B cell (primary cell): ENCODE measurements at regions of chr3 and their contacts with region 1.

Region 1: DNA sequence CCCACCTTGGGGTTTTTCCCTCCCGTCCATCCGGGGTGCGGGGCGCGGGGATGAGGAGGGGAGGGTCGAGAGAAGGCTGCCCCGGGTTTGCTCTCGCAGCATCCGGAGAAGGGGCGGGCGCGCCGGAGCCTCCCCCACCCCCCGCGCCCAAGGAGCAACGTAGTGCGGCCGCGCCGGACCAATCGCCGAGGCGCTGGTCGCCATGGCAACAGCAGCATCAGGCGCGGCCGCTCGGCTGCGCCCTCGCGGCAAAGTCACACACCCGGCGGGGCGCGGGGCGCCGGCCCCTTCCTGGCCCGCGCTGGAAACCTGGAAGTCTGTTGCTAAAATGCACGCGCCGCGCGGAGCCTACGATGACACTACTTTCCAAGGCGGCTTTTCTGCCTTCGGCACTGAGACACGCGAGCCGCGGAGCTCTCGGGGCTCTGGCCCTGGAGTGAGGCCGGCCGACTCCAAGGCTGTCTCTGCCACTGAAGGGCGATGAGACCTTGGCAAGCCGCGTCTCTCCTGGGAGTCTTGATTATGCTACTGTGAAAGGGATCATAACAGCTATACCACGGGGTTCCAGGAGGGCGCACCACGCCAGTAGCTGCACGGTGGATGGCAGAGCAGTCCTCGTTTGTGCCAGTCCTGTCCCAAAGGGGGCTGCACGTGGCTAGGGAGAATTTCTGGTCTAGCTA is at the start of gene IQSEC1:
- DNase-seq: peak; percentile 94
- ATAC-seq: peak; percentile 71
- H3K4me3 ChIP-seq: peak within 1 kb of the TSS; percentile 21 to 65 (median 53)
- H3K4me3 Mint-ChIP-seq: peak within 1 kb of the TSS; percentile 91
- H3K27ac ChIP-seq: peak within 1 kb of the TSS; percentile 79 to 90
- H3K27ac Mint-ChIP-seq: peak within 1 kb of the TSS; percentile 93
- H3K4me1 ChIP-seq: peaks cover 62 to 67% of the 10 kb centered on the region in 2 donors
- H3K4me1 Mint-ChIP-seq: peaks cover 68% of the 10 kb centered on the region
- H3K27me3 ChIP-seq: no peaks in the 10 kb centered on the region
- H3K27me3 Mint-ChIP-seq: no peaks in the 10 kb centered on the region
- CTCF ChIP-seq: no peak
- total RNA-seq, gene IQSEC1: 222 and 235 TPM in 2 replicates

Region 2: GRCh38 chr3:12967606-12968351 is 105.7 kb before region 1 on chr3:
- CTCF ChIA-PET with region 1: no interaction called
- POLR2A ChIA-PET with region 1: no interaction called
- intact Hi-C with region 1: loop called (anchors 2 kb)
- DNase-seq: peak; percentile 91
- ATAC-seq: peak; percentile 98
- H3K4me3 ChIP-seq: peak overlapping the region in 4 of 5 experiments; percentile 16 to 61 (median 44)
- H3K4me3 Mint-ChIP-seq: peak overlapping the region; percentile 86
- H3K27ac ChIP-seq: peak overlapping the region in 1 of 2 donors; percentile 11
- H3K27ac Mint-ChIP-seq: peak overlapping the region; percentile 85
- H3K4me1 ChIP-seq: peaks cover 55 to 78% of the 10 kb centered on the region in 2 donors
- H3K4me1 Mint-ChIP-seq: peaks cover 77% of the 10 kb centered on the region
- H3K27me3 ChIP-seq: no peaks in the 10 kb centered on the region
- H3K27me3 Mint-ChIP-seq: no peaks in the 10 kb centered on the region
- CTCF ChIP-seq: no peak

Region 3: DNA sequence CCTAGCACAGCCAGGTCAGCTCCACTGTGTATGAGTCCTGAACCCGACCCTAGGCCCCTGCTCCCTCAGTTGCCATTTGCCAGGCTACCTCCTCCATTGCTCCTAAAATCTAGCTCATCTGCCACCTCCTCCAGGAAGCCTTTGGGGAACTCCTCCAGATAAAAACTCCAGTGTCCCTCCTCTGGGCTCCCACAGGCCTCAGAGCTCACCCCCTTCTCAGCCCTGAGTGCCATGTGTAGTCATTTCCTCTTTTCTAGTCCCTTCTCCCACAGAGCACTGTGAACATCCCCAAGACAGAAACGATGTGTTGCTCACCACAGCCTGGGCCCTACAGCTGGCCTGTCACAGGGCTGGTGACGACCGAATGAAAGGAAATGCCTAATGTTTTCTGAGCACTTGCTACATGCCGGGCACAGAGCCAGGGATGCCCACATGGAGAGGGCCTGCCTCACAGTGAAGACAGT is 61.2 kb before region 1 on chr3:
- CTCF ChIA-PET with region 1: interaction called, 6 read pairs
- POLR2A ChIA-PET with region 1: interaction called, 3 read pairs
- intact Hi-C with region 1: loop called (anchors 1 kb)
- DNase-seq: peak; percentile 88
- ATAC-seq: peak; percentile 31
- H3K4me3 ChIP-seq: peak overlapping the region in 2 of 5 experiments; percentile 3 to 6
- H3K4me3 Mint-ChIP-seq: peak overlapping the region; percentile 86
- H3K27ac ChIP-seq: peak overlapping the region; percentile 96 to 97
- H3K27ac Mint-ChIP-seq: peak overlapping the region; percentile 95
- H3K4me1 ChIP-seq: peaks cover 98 to 100% of the 10 kb centered on the region in 2 donors
- H3K4me1 Mint-ChIP-seq: peaks cover 95% of the 10 kb centered on the region
- H3K27me3 ChIP-seq: no peaks in the 10 kb centered on the region
- H3K27me3 Mint-ChIP-seq: no peaks in the 10 kb centered on the region
- CTCF ChIP-seq: no peak

Region 4: GRCh38 chr3:13083898-13084297 is 10.4 kb after region 1 on chr3:
- CTCF ChIA-PET with region 1: interaction called, 5 read pairs
- POLR2A ChIA-PET with region 1: interaction called, 8 read pairs
- intact Hi-C with region 1: loop called (anchors 1 kb)
- DNase-seq: peak; percentile 89
- ATAC-seq: peak; percentile 58
- H3K4me3 ChIP-seq: peak overlapping the region in 1 of 5 experiments; percentile 17
- H3K4me3 Mint-ChIP-seq: peak overlapping the region; percentile 82
- H3K27ac ChIP-seq: peak overlapping the region; percentile 86 to 94
- H3K27ac Mint-ChIP-seq: peak overlapping the region; percentile 95
- H3K4me1 ChIP-seq: peaks cover 83 to 98% of the 10 kb centered on the region in 2 donors
- H3K4me1 Mint-ChIP-seq: peaks cover 90% of the 10 kb centered on the region
- H3K27me3 ChIP-seq: no peaks in the 10 kb centered on the region
- H3K27me3 Mint-ChIP-seq: no peaks in the 10 kb centered on the region
- CTCF ChIP-seq: no peak

Region 5: DNA sequence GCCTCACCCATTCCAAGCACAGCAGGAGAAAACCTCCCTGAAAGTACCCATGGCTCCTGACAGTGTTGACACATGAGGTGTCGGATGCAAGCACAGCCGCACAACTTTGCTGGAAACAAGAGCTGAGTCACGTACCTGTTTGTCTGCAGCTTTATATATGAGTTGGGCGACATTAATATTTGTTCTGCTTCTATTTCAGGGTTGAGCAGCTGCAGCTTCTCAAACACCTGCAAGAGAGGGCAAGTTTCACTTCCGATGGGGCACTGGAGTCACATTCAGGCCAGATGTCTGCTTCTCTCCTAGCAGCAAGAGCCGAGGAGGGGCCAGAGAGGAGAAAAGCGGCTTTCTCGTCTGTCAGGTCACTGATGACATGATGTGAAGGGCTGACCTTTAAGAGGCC is 258.7 kb after region 1 on chr3:
- CTCF ChIA-PET with region 1: no interaction called
- POLR2A ChIA-PET with region 1: no interaction called
- intact Hi-C with region 1: loop called (anchors 5 kb)
- DNase-seq: peak; percentile 87
- ATAC-seq: peak; percentile 89
- H3K4me3 ChIP-seq: no peak overlapping the region
- H3K4me3 Mint-ChIP-seq: peak overlapping the region; percentile 62
- H3K27ac ChIP-seq: peak overlapping the region; percentile 46 to 64
- H3K27ac Mint-ChIP-seq: peak overlapping the region; percentile 87
- H3K4me1 ChIP-seq: peaks cover 27 to 41% of the 10 kb centered on the region in 2 donors
- H3K4me1 Mint-ChIP-seq: peaks cover 40% of the 10 kb centered on the region
- H3K27me3 ChIP-seq: no peaks in the 10 kb centered on the region
- H3K27me3 Mint-ChIP-seq: no peaks in the 10 kb centered on the region
- CTCF ChIP-seq: no peak